Right ventricle myocardium superior (tissue), 1 donor: ENCODE measurements at regions of chr7 and their contacts with region 1.

Region 1: DNA sequence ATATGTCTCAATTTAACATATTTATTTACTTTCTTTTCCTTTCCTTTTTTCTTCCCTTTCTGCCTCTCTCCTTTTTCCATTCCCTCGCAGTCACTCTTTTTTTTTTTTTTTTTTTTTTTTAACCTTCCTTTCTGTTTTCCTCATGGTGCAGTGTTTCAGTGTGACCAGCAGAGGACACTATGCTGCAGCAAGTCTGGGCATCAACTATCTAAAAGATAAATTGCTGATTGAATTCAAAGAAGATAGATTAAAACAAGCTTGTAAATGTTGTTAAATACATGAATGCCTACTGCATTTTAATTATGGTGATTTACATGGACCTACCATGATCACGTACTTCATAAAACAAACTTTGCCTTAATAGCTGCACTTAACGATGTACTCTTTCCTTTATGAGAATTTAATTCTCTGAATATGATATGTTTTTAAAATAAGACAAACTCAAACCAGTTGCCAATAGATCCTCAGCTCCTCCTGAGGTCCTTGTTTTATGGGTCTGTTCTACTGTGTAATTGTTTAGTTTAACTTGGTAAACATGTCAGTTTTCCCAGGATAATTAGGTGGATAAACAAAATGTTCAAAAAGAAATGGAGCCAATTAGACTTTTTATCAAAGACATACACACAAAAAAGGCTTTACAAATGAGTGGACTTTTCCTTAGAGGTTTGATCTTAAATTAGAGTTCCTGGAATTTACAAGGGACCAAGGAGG is 101.0 kb upstream of the AGR3 start:
- DNase-seq: no peak
- ATAC-seq: peak; percentile 56

Region 2: GRCh38 chr7:17041324-17041723 is 58.5 kb after region 1 on chr7:
- intact Hi-C with region 1: no loop called
- DNase-seq: no peak
- ATAC-seq: peak; percentile 75

Region 3: DNA sequence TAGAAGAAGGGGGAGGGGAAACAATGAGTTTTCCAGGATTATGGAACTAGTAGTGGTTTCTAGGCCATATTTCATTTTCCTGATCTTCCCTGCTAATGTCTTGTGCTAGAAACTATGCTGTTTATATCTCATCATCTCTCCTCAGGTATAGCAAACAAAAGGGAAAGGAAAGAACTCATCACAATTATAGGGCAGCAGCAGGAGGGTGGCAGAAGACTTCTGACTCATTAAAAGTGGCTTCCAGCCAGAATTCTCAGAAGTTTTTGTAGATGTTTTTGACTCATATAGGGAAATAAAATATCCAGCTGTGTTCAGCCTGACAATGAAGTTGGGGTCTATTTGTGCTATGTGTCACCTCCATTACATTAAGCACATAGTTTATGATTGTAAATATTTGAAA is 322.1 kb after region 1 on chr7:
- intact Hi-C with region 1: loop called (anchors 5 kb)
- DNase-seq: no peak
- ATAC-seq: no peak

Region 4: GRCh38 chr7:17523813-17524741 is 541.3 kb after region 1 on chr7:
- intact Hi-C with region 1: loop called (anchors 10 kb)
- DNase-seq: peak; percentile 41
- ATAC-seq: peak; percentile 61

Region 5: GRCh38 chr7:17640730-17641377 is 658.1 kb after region 1 on chr7:
- intact Hi-C with region 1: loop called (anchors 10 kb)
- DNase-seq: no peak
- ATAC-seq: peak; percentile 41